Dorsolateral prefrontal cortex (tissue), 120 donors: ENCODE measurements at regions of chr2 and their contacts with region 1.

Region 1: DNA sequence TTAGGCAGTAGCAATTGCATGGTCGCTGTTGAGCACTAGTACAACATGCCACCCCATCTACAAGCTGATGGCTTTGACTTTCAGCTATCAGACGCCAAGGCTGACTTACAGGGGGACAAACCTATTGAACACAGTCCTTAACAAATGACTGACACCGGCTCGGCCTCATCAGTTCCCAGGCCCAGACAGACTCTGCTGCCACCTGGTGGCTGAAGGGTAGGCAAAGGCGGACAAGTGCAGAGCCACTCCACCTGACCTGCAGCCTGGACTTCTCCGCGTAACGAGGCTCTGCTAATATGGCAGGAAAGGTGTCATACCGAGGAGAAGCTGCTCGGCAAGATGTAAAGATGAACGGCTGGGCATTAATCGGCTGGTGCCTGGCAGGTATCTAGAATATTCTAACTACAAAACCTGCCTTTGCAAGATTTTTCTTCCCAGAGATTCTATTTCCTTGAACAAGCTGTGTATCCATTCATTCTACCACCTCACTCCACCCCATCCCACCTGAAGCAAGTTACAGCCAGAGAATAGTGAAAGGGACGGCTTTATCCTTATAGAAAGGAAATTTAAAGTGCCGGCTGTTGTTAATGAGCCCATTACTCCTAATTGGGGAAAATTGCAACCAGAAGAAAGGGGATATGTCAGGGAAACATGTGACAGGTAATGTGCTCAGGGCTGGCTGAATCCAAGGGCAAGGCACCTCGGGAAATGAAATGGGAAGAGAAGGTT is 67.4 kb downstream of the STEAP3 start:
- DNase-seq: peak in 9 of 10 donors; percentile 54 to 93 (median 86)
- H3K4me3 ChIP-seq: peak overlapping the region in 1 of 59 donors; percentile 27
- H3K27ac ChIP-seq: no peak overlapping the region
- H3K27me3 ChIP-seq: no peaks in the 10 kb centered on the region
- CTCF ChIP-seq: peak in 55 of 56 donors; percentile 25 to 99 (median 82)

Region 2: DNA sequence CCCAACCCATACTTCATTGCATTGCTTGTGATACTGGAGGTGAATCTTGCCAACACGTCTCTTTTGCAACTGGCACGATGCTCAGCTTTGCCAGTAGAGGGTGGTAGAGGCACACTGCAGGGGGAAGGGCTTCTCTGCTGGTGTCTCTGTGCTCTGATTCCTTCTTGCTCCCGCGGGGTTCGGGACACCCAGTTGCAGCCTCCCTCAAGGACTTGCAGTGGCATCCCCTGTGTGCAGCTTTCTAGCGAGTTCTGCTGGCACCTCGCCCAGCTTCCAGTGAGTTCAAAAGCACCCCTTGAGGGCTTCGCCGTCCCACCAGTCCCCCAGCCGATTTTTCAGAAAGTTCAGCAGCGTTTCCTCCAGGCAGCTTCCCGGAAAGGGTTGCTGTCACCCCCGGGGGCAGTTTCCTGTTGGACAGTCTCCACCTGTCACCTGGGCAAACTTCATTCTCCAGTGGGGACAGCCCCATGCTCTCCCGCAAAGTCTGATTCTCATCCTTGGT is 408.3 kb before region 1 on chr2:
- intact Hi-C with region 1: loop called (anchors 1 to 5 kb)
- DNase-seq: peak in 8 of 10 donors; percentile 15 to 74 (median 58)
- H3K4me3 ChIP-seq: peak overlapping the region in 27 of 59 donors; percentile 4 to 48 (median 28)
- H3K27ac ChIP-seq: no peak overlapping the region
- H3K27me3 ChIP-seq: peaks cover 0 to 42% (median 25%) of the 10 kb centered on the region in 45 donors
- CTCF ChIP-seq: peak; percentile 40 to 90 (median 81)

Region 3: DNA sequence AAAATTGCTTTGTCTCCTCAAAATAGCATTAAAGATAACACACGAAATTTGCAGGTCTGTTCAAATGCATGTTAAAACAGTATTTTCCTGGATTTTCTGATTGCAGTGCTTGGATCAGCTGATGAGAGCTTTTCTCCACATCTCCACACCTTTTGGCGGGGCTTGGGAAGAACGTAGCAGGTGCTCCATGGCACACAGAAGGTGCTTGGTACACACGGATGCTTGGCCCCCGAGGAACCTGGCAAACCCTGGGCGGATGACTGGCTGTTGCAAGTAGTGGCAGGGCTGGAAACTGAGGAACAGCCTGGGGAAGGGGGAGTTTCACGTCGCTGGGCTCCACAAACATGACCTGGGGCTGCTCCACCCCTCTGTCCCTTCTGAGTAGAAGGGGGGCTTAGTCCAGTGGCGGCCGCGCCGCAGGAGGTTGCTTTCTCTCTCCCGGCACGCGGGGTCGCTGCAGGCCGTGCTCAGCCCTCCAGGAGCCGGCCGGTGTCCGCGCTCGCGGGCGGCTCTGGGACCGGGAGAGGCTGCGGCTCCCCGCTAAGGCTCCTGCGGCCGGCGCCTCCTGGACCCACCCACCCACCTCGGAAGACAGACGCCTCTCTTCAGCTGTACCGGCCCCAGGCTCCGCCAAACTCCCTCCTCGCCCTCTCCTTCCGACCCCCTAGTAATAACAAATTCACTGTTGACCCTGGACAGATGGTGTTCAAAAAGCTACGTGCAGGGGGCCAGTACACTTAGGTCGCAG is 279.7 kb before region 1 on chr2:
- intact Hi-C with region 1: loop called (anchors 2 kb)
- DNase-seq: peak in 6 of 10 donors; percentile 26 to 75 (median 54)
- H3K4me3 ChIP-seq: peak overlapping the region in 28 of 59 donors; percentile 0 to 50 (median 28)
- H3K27ac ChIP-seq: no peak overlapping the region
- H3K27me3 ChIP-seq: peaks cover 0 to 39% (median 7%) of the 10 kb centered on the region in 45 donors
- CTCF ChIP-seq: peak in 54 of 56 donors; percentile 28 to 79 (median 64)

Region 4: DNA sequence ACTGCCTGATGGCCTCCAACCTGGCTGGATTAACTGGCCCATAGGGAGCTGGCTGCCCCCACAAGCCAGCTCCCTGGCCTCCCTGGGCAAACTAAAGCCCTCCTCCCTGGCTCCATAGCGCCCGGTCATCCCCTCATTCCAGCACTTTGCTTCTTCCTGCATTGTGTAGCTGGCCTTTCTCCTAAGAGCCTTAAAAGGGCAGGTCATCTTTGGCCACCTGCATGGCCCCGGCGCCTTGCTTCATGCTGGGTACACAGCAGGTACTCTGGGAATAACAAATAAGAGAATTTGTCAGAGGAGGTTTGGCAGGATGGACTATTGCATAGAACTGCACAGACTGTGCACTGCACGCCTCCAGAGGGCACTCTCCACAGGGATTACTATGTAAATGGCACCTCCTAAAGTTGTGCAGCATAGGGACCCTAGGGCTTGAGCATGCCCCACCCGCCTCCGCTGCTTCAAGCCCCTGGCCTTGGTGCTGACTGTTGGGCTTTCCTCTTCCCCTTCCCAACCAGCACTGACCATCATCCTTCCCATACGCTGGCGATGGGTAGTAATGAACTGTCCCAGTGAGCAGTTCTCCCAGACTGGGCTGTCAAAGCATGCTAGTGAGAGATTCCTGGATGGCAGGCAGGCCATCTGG is 56.5 kb before region 1 on chr2:
- intact Hi-C with region 1: loop called in 1 of 2 experiments (anchors 5 kb)
- DNase-seq: peak in 1 of 10 donors; percentile 42
- H3K4me3 ChIP-seq: no peak overlapping the region
- H3K27ac ChIP-seq: no peak overlapping the region
- H3K27me3 ChIP-seq: no peaks in the 10 kb centered on the region
- CTCF ChIP-seq: peak in 50 of 56 donors; percentile 11 to 62 (median 36)

Region 5: GRCh38 chr2:119387381-119388129 is 96.5 kb after region 1 on chr2:
- intact Hi-C with region 1: no loop called
- DNase-seq: peak; percentile 32 to 87 (median 69)
- H3K4me3 ChIP-seq: peak overlapping the region in 2 of 59 donors; percentile 19
- H3K27ac ChIP-seq: peak overlapping the region in 54 of 59 donors; percentile 22 to 82 (median 61)
- H3K27me3 ChIP-seq: no peaks in the 10 kb centered on the region
- CTCF ChIP-seq: peak in 11 of 56 donors; percentile 5 to 27 (median 13)